BJ (cell line): ENCODE measurements at regions of chr5 and their contacts with region 1.

Region 1: DNA sequence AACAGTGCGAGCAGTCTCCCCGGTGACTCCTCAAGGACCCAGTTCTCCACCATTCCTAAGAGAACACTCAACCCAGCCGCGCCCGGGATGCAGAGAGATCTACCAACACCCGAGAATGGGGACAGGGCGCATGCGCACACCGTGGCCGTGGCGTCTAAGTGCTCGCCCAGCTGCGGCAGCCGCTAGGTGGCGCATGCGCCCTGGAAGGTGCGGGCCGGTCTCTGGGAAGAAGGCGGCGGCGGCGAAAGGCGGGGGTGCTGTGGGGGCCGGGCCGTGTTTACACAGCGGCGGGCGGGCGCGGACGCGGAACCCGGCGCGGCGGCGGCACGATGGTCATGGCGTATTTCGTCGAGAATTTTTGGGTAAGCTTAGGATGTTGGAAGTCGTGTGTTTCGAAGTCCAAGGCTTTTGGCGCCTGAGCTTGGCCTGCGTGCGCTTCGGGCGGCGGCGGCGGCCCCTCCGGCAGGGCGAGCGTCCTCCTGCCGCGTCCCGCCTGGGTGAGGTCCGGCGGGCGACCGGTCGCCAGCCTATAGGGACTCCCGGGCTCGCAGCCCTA is at the start of gene FCHO2:
- DNase-seq: peak; percentile 68
- H3K4me3 ChIP-seq: peak within 1 kb of the TSS; percentile 69
- H3K27me3 ChIP-seq: no peaks in the 10 kb centered on the region
- CTCF ChIP-seq: peak; percentile 81
- polyA plus RNA-seq, gene FCHO2: 15.7 and 15.8 TPM in 2 replicates

Region 2: GRCh38 chr5:72920690-72921502 is 35.0 kb before region 1 on chr5:
- CTCF ChIA-PET with region 1: no interaction called
- POLR2A ChIA-PET with region 1: interaction called, 12 read pairs
- DNase-seq: no peak
- H3K4me3 ChIP-seq: no peak overlapping the region
- H3K27me3 ChIP-seq: no peaks in the 10 kb centered on the region
- CTCF ChIP-seq: 0 out of 2 replicates have a peak, but pooled peaks have one; percentile 20

Region 3: DNA sequence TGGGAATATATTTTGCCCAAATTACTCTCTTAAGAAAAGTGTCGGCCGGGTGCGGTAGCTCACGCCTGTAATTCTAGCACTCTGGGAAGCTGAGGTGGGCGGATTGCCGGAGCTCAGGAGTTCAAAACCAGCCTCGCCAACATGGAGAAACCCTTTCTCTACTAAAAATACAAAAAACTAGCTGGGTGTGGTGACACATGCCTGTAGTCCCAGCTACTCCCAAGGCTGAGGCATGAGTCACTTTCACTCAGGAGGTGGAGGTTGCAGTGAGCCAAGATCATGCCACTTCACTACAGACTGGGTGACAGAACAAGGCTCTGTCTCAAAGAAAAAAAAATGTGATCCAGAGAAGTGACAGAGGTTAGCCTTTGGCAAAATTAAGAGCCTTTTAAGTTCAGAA is 138.1 kb after region 1 on chr5:
- CTCF ChIA-PET with region 1: no interaction called
- POLR2A ChIA-PET with region 1: interaction called, 11 read pairs
- DNase-seq: peak; percentile 21
- H3K4me3 ChIP-seq: no peak overlapping the region
- H3K27me3 ChIP-seq: no peaks in the 10 kb centered on the region
- CTCF ChIP-seq: no peak